BJ (cell line): ENCODE measurements at regions of chr1 and their contacts with region 1.

Region 1: GRCh38 chr1:46247436-46248121 is at the start of gene RAD54L:
- DNase-seq: peak; percentile 85
- H3K4me3 ChIP-seq: peak within 1 kb of the TSS; percentile 63
- H3K27me3 ChIP-seq: no peaks in the 10 kb centered on the region
- CTCF ChIP-seq: no peak
- polyA plus RNA-seq, gene RAD54L: 4.3 and 5.6 TPM in 2 replicates

Region 2: DNA sequence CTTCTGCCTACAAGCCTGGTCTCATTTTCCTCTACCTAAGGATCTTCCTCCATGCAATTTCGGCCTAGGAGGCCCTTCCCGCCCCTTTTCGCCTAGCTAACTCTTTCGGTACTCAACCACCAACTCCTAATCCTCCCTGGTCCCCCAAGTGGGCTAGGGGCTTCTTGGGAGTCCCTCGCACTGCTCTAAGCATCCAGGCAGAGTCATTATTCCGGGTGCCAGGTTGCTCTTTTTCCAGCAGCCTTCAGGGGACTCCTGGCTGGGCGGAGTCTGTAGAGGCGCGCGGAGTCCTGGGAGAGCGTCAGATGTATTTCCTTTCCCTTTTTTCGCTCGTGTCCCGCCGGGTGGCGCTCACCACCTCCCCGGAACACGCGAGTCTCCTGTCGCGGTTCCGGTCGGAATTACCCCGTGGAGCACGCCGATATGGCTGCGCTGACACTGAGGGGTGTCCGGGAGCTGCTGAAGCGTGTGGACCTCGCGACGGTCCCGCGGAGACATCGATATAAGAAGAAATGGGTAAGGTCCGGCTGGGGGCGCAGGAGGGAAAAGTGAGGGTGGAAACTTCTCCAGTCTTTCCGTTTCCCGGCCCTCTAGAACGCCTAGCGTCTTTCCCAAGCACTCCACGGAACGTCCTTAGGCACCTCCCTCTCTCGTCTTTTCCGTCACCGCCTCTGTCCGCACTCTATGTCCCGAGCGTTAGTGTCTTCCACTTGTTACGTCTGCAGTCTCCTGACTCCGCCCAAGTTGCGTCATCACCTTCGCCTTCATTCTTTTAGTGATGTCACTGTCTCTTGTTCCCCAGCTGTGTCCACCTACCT is 93.0 kb after region 1 on chr1 and contains the start of gene NSUN4:
- CTCF ChIA-PET with region 1: interaction called, 47 read pairs
- POLR2A ChIA-PET with region 1: no interaction called
- DNase-seq: peak; percentile 68
- H3K4me3 ChIP-seq: peak within 1 kb of the TSS; percentile 61
- H3K27me3 ChIP-seq: no peaks in the 10 kb centered on the region
- CTCF ChIP-seq: peak; percentile 87
- polyA plus RNA-seq, gene NSUN4: 24.0 and 24.2 TPM in 2 replicates

Region 3: GRCh38 chr1:46425726-46426125 is 178.1 kb after region 1 on chr1:
- CTCF ChIA-PET with region 1: no interaction called
- POLR2A ChIA-PET with region 1: no interaction called
- DNase-seq: no peak
- H3K4me3 ChIP-seq: no peak overlapping the region
- H3K27me3 ChIP-seq: peaks cover 2% of the 10 kb centered on the region
- CTCF ChIP-seq: no peak